PC-9 (cell line): ENCODE measurements at regions of chr11 and their contacts with region 1.

Region 1: DNA sequence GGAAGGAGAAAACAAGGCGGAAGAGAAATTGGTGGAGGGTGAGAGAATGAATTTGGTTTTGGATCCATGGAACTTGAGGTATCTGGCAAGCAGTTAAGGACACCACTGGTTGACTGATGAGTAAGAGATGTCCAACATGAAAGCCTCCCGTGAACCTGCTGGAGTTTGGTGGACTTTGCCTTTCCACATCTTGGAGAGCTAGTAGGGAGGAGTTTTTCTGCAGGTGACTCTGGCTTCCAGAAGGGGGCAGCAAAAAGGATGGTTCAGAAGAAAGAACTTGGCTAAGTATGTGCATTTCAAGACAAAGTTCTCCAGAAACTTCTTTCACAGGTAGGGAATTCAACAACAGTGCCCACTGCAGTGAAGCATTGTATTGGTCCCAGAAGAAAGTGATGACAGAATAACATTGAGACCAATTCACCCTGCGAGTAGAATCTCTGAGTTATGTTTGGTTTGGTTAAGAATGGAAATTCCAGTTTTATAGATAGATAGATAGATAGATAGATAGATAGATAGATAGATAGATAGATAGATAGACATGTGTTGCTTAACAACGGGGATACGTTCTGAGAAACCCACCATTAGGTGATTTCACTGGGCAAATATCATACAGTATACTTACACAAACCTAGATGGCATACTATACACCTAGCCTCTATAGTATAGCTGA is 28.5 kb downstream of the DCDC1 start:
- DNase-seq: peak in 1 of 2 experiments; percentile 10
- H3K4me3 ChIP-seq: no peak overlapping the region
- H3K27ac ChIP-seq: no peak overlapping the region
- H3K4me1 ChIP-seq: no peaks in the 10 kb centered on the region
- H3K27me3 ChIP-seq: no peaks in the 10 kb centered on the region
- CTCF ChIP-seq: peak; percentile 71

Region 2: GRCh38 chr11:31601635-31602282 is 260.7 kb after region 1 on chr11:
- CTCF ChIA-PET with region 1: interaction called, 13 read pairs
- POLR2A ChIA-PET with region 1: no interaction called
- intact Hi-C with region 1: no loop called
- DNase-seq: no peak
- H3K4me3 ChIP-seq: no peak overlapping the region
- H3K27ac ChIP-seq: no peak overlapping the region
- H3K4me1 ChIP-seq: no peaks in the 10 kb centered on the region
- H3K27me3 ChIP-seq: no peaks in the 10 kb centered on the region
- CTCF ChIP-seq: no peak